ENCODE measurements at regions of chr13 and their contacts with region 1.

Region 1: DNA sequence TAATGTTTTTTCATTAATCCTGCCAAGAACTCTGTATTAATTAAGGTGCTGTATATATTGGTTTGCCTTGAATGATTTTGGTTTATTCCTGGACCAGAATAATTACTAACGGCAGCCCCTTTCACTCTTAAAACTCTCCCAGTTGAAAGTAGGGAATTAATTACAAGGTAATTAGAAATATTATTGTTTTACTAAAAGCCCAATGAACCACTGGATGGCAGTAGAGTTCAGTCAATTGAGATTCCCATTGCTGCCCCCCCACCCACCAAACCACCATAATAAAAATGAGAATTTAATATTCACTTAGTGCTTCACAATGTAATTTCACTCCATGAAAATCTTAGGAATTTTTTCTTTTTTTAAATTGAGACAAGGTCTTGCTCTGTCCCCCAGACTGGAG is 13.7 kb downstream of the WBP4 start:
- DNase-seq: no peak
- H3K4me3 ChIP-seq: no peak overlapping the region
- H3K27ac ChIP-seq: no peak overlapping the region
- H3K4me1 ChIP-seq: peaks cover 0 to 7% (median 0%) of the 10 kb centered on the region in 6 donors
- H3K27me3 ChIP-seq: no peaks in the 10 kb centered on the region
- CTCF ChIP-seq: peak in 8 of 11 experiments; percentile 27 to 65 (median 52)
- POLR2A ChIP-seq: no peak

Region 2: GRCh38 chr13:41122838-41123237 is 47.8 kb after region 1 on chr13:
- intact Hi-C with region 1: loop called (anchors 10 kb)
- DNase-seq: no peak
- H3K4me3 ChIP-seq: no peak overlapping the region
- H3K27ac ChIP-seq: no peak overlapping the region
- H3K4me1 ChIP-seq: peaks cover 0 to 7% (median 1%) of the 10 kb centered on the region in 6 donors
- H3K27me3 ChIP-seq: no peaks in the 10 kb centered on the region
- CTCF ChIP-seq: no peak
- POLR2A ChIP-seq: no peak

Region 3: GRCh38 chr13:41222259-41222852 is 147.3 kb after region 1 on chr13:
- intact Hi-C with region 1: loop called (anchors 5 kb)
- DNase-seq: no peak
- H3K4me3 ChIP-seq: no peak overlapping the region
- H3K27ac ChIP-seq: peak overlapping the region in 2 of 8 donors; percentile 60 to 64
- H3K4me1 ChIP-seq: peaks cover 0 to 13% (median 0%) of the 10 kb centered on the region in 6 donors
- H3K27me3 ChIP-seq: no peaks in the 10 kb centered on the region
- CTCF ChIP-seq: peak; percentile 66 to 89 (median 82)
- POLR2A ChIP-seq: no peak

Region 4: DNA sequence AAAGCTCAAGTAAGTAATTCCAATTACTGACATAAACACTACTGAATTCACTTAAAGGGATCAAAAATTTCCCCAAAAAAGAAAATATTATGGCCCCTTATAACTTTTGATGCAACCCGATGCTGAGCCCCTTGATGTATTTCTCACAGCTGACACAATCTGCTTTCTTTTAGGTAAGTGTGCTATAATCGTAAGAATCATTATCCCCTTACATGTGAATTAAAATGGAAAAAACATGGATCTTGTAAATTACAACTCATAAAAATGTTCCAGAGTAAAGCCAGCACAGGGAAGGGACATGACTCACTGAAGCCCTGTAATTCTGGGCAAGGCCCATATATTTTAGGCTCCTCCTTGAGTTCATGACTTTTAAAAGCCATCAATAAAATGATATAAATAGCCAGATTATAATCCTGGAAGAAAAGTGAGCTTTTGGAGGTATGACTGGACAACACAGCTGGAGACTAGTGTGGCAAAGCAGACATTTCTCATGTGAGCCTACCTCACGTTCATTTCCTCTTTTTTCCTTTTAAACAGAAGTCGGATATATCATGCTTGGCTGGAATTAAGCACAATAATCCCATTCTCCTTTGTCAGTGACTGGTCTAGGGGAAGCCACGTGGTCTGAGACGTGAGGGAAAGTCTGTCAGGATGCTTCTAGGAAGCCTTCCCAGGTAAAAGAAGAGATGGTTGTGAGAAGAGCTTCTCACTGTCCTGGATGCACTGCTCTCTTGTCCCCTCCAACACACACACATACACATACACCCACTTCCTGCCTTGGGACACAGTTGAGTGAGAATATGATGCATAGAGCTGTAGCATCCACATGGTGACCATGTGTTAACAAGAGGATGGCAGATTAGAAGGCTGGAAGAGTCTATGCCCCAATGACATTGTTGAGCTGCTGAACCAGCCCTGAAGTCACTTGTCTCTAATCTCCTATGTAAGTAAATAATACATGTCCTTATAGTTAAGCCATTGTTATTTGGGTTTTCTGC is 547.7 kb after region 1 on chr13:
- intact Hi-C with region 1: no loop called
- DNase-seq: no peak
- H3K4me3 ChIP-seq: no peak overlapping the region
- H3K27ac ChIP-seq: peak overlapping the region in 1 of 8 donors; percentile 14
- H3K4me1 ChIP-seq: no peaks in the 10 kb centered on the region
- H3K27me3 ChIP-seq: no peaks in the 10 kb centered on the region
- CTCF ChIP-seq: no peak
- POLR2A ChIP-seq: no peak